Activated naive CD4-positive, alpha-beta T cell treated with anti-CD3 and anti-CD28 coated beads for 36 hours (primary cell): ENCODE measurements at regions of chr10 and their contacts with region 1.

Region 1: GRCh38 chr10:7260412-7260900 is 150.4 kb downstream of the SFMBT2 start:
- DNase-seq: peak; percentile 20
- H3K4me3 Mint-ChIP-seq: no peak overlapping the region
- H3K27ac Mint-ChIP-seq: peak overlapping the region; percentile 21
- H3K4me1 Mint-ChIP-seq: peaks cover 62% of the 10 kb centered on the region
- H3K27me3 Mint-ChIP-seq: no peaks in the 10 kb centered on the region

Region 2: DNA sequence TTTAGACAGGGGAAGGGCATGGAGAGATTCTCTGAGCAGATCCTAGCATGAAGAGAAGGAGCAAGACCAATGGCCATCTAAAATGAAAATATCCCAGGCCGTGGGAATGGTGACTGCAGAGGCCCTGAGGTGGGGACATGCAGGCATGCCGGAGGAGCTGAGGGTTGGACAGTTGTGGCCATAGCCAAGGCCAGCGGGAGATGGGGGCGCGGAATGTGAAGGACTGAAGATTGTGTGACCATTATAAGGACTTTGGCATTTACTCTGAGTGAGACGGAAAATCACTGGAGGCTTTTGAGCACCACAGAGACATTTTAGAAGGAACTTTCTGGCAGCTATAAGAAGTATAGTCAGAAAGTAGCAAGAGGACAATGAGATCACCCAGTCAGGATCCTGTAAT is 190.8 kb before region 1 on chr10:
- CTCF ChIA-PET with region 1: no interaction called
- intact Hi-C with region 1: no loop called
- DNase-seq: no peak
- H3K4me3 Mint-ChIP-seq: no peak overlapping the region
- H3K27ac Mint-ChIP-seq: no peak overlapping the region
- H3K4me1 Mint-ChIP-seq: no peaks in the 10 kb centered on the region
- H3K27me3 Mint-ChIP-seq: no peaks in the 10 kb centered on the region

Region 3: GRCh38 chr10:7121154-7121810 is 139.2 kb before region 1 on chr10:
- CTCF ChIA-PET with region 1: interaction called, 5 read pairs
- intact Hi-C with region 1: loop called (anchors 1 kb)
- DNase-seq: peak; percentile 86
- H3K4me3 Mint-ChIP-seq: no peak overlapping the region
- H3K27ac Mint-ChIP-seq: no peak overlapping the region
- H3K4me1 Mint-ChIP-seq: peaks cover 5% of the 10 kb centered on the region
- H3K27me3 Mint-ChIP-seq: no peaks in the 10 kb centered on the region

Region 4: DNA sequence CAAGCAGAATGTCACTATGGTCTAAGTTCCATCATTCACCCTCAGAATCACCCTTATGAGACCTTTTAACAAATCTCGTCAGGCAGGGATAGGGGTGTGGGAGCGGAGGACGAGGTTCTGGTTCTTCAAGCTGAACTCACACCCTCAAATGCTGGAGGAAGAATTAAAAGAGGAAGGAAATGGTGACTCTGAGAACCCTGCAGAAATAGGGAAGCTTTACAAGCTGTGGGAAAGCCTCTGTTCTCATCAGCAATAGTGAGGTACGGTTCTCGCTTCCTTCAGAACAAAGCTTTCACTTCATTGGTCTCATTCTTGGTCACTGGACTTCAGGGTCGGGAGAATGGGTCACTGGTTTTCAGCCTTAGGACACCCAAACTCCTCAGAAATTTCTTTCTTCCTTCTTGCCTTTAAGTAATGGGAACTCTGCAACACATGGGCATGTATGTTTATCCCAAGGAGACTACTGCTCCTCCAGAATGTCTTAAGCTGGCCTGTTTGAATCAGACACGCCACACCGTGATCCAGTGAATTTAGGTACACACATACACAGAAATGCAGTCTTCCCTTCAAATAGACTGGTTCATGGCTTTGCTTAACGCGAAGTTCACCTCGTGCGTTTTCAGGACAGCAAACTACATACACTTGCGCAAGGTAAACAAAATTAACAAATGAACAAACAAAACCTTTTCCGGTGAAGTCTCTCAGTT is 75.6 kb before region 1 on chr10:
- CTCF ChIA-PET with region 1: no interaction called
- intact Hi-C with region 1: loop called (anchors 1 kb)
- DNase-seq: no peak
- H3K4me3 Mint-ChIP-seq: peak overlapping the region; percentile 1
- H3K27ac Mint-ChIP-seq: peak overlapping the region; percentile 81
- H3K4me1 Mint-ChIP-seq: peaks cover 52% of the 10 kb centered on the region
- H3K27me3 Mint-ChIP-seq: no peaks in the 10 kb centered on the region

Region 5: DNA sequence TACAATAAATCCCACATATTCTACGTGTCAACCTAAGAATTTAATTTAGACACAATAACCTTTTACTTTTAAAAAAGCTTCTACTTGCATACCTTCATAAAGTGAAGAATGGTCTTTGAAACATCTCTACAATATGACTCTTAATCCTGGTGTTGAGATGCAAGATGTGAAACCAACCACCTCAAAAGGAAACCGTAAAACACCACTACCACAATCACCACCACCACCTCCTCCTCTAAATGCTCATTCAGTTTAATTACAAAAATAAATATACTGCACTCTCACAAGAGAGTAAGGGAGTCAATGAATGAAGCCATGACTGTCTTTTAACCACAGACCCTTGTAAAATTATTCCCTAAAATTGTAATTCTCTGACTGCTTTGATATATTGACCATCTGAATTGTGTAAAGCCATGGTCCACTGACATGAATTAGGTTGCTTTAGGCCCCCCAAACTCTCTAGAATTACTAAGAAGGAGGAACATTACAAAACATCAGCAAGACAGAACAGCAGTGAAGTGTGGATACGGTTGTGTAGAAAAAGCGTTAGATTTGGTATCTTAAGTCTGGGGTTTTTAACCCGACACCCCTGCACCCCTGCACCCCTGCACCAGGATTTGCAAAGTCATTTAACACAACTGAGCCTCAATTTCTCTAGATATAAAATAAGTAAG is 21.0 kb before region 1 on chr10:
- CTCF ChIA-PET with region 1: no interaction called
- intact Hi-C with region 1: loop called (anchors 1 kb)
- DNase-seq: peak; percentile 63
- H3K4me3 Mint-ChIP-seq: no peak overlapping the region
- H3K27ac Mint-ChIP-seq: no peak overlapping the region
- H3K4me1 Mint-ChIP-seq: peaks cover 35% of the 10 kb centered on the region
- H3K27me3 Mint-ChIP-seq: no peaks in the 10 kb centered on the region

Region 6: DNA sequence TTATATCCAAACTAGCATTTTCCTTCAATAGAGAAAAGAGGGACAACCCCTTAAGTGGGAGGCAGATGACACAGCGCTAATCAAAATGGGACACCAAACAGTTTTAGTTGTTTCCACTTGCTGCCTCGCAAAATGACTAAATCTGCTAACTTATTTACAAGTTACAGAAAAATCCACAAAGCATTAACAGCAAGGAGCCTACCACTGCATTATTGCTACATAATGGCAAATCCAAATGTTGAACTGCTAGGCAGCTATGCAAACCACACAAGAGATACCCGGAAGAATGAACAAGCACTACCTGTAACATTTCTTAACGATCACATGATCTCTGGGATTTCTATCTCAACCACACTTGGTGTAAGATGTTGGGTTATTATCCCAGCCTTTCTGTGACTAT is 53.7 kb after region 1 on chr10:
- CTCF ChIA-PET with region 1: no interaction called
- intact Hi-C with region 1: loop called (anchors 1 kb)
- DNase-seq: peak; percentile 60
- H3K4me3 Mint-ChIP-seq: no peak overlapping the region
- H3K27ac Mint-ChIP-seq: peak overlapping the region; percentile 78
- H3K4me1 Mint-ChIP-seq: peaks cover 52% of the 10 kb centered on the region
- H3K27me3 Mint-ChIP-seq: no peaks in the 10 kb centered on the region

Region 7: DNA sequence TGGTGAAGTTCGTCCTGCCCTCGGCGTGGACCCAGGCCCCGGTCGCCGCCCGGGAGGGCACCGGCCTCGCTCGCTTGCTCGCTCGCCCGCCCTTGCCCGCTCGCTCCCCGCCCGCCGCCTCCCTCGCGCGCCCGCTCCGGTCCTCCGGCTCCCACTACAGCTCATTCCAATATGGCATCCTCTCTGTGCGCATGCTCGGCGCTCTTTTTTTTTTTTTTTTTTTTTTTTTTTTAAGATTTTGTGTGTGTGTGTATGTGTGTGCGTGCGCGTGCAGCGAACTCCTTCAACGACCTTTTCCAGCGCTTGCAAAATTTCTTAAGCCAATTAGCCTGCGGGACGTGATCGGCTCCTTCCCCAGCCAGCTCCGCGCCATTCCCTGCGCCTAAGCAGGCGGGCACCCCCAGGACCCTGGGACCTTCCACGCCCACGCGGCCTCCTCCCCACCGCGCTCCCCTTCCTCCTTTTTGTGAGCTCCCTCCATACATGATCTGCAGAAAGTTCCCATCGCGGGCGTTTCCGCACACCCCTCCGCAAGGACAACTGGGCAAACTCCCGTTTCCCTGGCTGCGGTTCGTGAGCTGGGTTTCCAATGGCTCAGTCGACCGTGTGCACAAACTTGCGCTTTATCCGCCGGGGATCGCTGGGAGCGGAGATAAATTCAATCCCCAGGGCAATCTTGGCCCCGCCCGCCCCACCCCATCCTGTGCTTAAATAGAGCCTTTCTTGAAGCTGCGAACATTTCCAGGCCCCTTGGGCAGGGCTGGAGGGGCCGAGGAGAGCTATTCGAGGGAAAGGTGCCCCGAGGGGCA is 150.6 kb after region 1 on chr10 and contains the start of gene SFMBT2:
- CTCF ChIA-PET with region 1: interaction called, 7 read pairs
- intact Hi-C with region 1: loop called (anchors 1 kb)
- DNase-seq: peak; percentile 73
- H3K4me3 Mint-ChIP-seq: peak within 1 kb of the TSS; percentile 97
- H3K27ac Mint-ChIP-seq: peak within 1 kb of the TSS; percentile 92
- H3K4me1 Mint-ChIP-seq: peaks cover 32% of the 10 kb centered on the region
- H3K27me3 Mint-ChIP-seq: peaks cover 15% of the 10 kb centered on the region
- total RNA-seq, gene SFMBT2: 20.0 to 21.5 TPM